RWPE1 (cell line): ENCODE measurements at regions of chr2 and their contacts with region 1.

Region 1: GRCh38 chr2:171225302-171225980 is 64.7 kb upstream of the TLK1 start:
- DNase-seq: peak; percentile 61
- H3K27ac ChIP-seq: no peak overlapping the region
- CTCF ChIP-seq: no peak

Region 2: DNA sequence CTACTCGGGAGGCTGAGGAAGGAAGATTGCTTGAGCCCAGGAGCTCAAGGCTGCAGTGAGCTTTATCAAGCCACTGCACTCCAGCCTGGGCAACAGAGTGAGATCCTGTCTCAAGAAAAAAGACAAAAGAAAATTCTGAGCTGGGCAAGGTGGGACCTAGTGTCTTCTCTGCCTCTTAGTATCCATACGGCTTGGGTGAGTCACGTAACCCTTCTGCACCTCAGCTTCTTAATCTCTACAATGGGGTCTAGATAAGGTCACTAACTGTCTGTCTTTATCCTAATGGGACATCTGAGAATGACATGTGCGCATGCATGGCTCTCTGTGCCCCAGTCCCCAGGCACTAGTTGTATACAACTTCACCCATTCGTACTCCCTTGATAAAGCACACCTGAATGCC is 11.3 kb before region 1 on chr2:
- CTCF ChIA-PET with region 1: interaction called, 3 read pairs
- POLR2A ChIA-PET with region 1: interaction called, 10 read pairs
- DNase-seq: no peak
- H3K27ac ChIP-seq: no peak overlapping the region
- CTCF ChIP-seq: no peak